Aorta (tissue), 5 donors: ENCODE measurements at regions of chr1 and their contacts with region 1.

Region 1: DNA sequence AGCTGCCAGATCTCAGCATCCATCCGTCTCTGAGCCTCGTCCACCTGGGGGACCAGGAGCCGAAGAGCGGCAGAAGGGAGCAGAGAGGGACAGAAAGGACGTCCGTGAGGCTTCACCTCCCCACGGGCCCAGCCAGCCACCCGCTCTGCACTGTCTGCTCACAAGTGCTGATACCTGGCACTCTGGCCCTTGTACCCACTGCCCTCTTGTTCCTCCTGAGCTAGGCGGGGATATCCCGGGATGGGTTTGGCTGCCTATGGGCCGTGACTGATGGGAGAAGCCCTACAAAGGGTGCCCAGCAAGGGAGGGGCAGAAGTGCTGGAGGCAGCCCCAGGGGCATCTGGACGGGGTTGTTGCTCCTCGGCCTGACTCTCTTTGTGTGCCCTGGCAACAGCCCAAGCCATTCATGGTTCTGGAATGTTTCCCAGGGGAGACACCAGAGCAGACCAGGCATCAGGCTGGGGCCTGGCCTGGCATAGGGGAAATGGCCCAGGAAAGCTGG is 57.6 kb downstream of the LDLRAD2 start:
- DNase-seq: peak; percentile 89 to 95
- ATAC-seq: peak; percentile 66
- H3K4me3 ChIP-seq: no peak overlapping the region
- H3K27ac ChIP-seq: peak overlapping the region in 1 of 2 donors; percentile 26
- H3K4me1 ChIP-seq: no peaks in the 10 kb centered on the region
- H3K27me3 ChIP-seq: no peaks in the 10 kb centered on the region

Region 2: DNA sequence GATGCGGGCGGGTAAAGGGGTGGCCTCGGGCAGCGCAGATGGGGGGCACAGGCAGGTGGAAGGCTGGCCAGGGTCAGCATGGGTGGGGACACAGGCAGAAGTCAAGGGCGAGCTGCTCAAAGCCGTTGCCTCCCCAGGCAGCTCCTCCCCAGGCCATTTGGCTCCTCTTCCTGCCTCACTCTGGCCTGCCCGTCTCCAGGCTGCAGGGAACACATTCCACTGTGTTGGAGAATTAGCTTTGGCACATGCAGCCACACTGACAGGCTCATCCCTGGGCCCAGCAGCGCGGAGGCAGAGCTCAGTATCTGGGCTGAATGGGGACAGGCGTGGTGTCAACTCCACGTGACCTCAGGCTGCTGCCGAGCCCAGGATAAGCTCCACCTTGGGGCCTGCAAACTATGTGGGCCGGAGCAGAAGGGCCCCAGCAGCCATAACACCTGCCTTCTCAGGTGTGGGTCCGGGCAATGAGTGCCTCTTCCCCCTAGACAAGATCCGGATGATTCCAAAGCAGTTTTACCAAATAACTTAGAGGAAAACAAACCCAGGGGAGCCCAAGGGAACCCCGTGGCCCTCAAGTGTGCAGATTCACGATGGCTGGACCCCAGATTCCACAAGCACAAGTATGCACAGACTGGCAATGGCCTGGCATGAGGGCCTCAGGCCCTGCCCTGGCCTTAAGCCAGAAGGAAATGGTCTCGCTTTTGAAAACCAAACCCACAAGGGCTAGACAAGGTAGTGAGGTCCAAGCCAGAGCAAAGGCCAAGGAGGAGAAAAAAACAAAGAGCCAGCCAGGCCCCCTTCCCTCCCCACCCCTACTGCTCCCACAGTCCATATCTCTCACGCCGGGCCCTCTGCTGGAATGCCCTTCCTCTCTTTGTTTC is 27.2 kb after region 1 on chr1:
- intact Hi-C with region 1: loop called in 1 of 2 experiments (anchors 2 kb)
- DNase-seq: peak; percentile 82 to 88
- ATAC-seq: peak; percentile 62
- H3K4me3 ChIP-seq: no peak overlapping the region
- H3K27ac ChIP-seq: peak overlapping the region; percentile 48 to 53
- H3K4me1 ChIP-seq: peaks cover 0 to 2% of the 10 kb centered on the region in 2 donors
- H3K27me3 ChIP-seq: no peaks in the 10 kb centered on the region